Activated B cell treated with CpG ODN at 0.5 μM for 24 hours (primary cell): ENCODE measurements at regions of chr12 and their contacts with region 1.

Region 1: GRCh38 chr12:122793685-122794106 is 19.3 kb downstream of the CCDC62 start:
- DNase-seq: no peak
- ATAC-seq: peak; percentile 67
- H3K4me3 Mint-ChIP-seq: no peak overlapping the region
- H3K27ac Mint-ChIP-seq: no peak overlapping the region
- H3K4me1 Mint-ChIP-seq: peaks cover 5% of the 10 kb centered on the region
- H3K27me3 Mint-ChIP-seq: no peaks in the 10 kb centered on the region
- CTCF ChIP-seq: peak; percentile 46

Region 2: DNA sequence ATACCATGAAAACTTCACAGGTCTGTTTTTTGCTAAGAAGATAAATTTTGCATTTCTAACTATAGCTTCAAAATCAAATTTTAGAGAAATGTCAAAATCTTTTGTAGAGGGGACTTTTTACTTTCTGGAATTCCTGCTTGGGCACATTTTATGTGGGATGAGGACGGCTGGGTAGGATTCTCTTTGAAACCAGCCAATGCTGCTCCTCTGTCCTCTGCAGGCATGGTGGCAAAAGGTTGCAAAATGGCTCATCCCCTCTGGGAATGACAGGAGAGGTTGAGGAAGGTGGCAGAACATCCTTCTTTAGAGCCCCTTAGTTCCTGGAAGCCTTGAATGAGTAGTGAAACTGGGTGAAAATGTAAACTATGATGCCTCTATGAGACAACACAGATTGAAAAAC is 26.0 kb before region 1 on chr12:
- CTCF ChIA-PET with region 1: no interaction called
- POLR2A ChIA-PET with region 1: no interaction called
- intact Hi-C with region 1: no loop called
- DNase-seq: no peak
- ATAC-seq: no peak
- H3K4me3 Mint-ChIP-seq: no peak overlapping the region
- H3K27ac Mint-ChIP-seq: no peak overlapping the region
- H3K4me1 Mint-ChIP-seq: no peaks in the 10 kb centered on the region
- H3K27me3 Mint-ChIP-seq: no peaks in the 10 kb centered on the region
- CTCF ChIP-seq: no peak

Region 3: GRCh38 chr12:122813310-122813713 is 19.6 kb after region 1 on chr12:
- CTCF ChIA-PET with region 1: interaction called, 9 read pairs
- POLR2A ChIA-PET with region 1: interaction called, 8 read pairs
- intact Hi-C with region 1: loop called (anchors 1 kb)
- DNase-seq: peak; percentile 54
- ATAC-seq: peak; percentile 95
- H3K4me3 Mint-ChIP-seq: peak overlapping the region; percentile 86
- H3K27ac Mint-ChIP-seq: peak overlapping the region; percentile 98
- H3K4me1 Mint-ChIP-seq: peaks cover 53% of the 10 kb centered on the region
- H3K27me3 Mint-ChIP-seq: no peaks in the 10 kb centered on the region
- CTCF ChIP-seq: no peak

Region 4: DNA sequence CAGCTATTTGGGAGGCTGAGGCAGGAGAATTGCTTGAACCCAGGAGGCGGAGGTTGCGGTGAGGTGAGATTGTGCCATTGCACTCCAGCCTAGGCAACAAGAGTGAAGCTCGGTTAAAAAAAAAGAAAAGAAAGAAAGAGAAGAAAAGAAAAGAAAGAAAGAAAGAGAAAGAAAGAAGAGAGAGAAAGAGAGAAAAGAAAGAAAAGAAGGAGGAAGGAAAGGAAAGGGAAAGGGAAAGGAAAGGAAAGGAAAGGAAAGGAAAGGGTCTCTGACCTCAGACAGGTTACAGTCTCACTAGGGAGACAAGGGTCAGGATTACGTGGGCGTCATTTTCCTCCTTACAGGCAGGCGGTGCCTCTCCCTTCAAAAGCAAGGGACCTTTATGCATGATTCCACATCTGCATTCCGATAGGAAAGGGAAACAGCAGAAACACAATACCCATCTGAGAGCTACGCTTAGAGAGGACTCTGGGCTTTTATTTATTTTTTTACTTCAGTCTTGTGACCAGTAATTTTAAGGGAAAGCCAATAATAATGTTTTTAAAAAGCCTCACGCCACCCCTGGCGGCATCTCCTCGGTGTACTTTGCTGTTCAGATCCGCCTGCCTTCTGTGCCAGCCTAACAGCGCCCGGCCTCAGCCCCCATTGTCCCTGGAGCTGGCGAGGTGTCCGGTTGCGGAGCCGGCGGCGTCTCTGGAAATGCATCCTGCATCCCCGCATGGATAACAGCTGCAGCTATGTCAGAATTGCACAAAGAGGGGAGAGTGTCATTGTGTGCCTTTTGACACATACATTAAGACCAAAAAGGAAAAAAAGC is 40.6 kb after region 1 on chr12:
- CTCF ChIA-PET with region 1: interaction called, 63 read pairs
- POLR2A ChIA-PET with region 1: interaction called, 23 read pairs
- intact Hi-C with region 1: loop called (anchors 1 kb)
- DNase-seq: peak; percentile 14
- ATAC-seq: no peak
- H3K4me3 Mint-ChIP-seq: peak overlapping the region; percentile 92
- H3K27ac Mint-ChIP-seq: peak overlapping the region; percentile 86
- H3K4me1 Mint-ChIP-seq: peaks cover 38% of the 10 kb centered on the region
- H3K27me3 Mint-ChIP-seq: no peaks in the 10 kb centered on the region
- CTCF ChIP-seq: no peak

Region 5: GRCh38 chr12:122860346-122861090 is 66.8 kb after region 1 on chr12:
- CTCF ChIA-PET with region 1: interaction called, 81 read pairs
- POLR2A ChIA-PET with region 1: interaction called, 6 read pairs
- intact Hi-C with region 1: loop called (anchors 1 kb)
- DNase-seq: peak; percentile 76
- ATAC-seq: peak; percentile 72
- H3K4me3 Mint-ChIP-seq: no peak overlapping the region
- H3K27ac Mint-ChIP-seq: no peak overlapping the region
- H3K4me1 Mint-ChIP-seq: peaks cover 49% of the 10 kb centered on the region
- H3K27me3 Mint-ChIP-seq: no peaks in the 10 kb centered on the region
- CTCF ChIP-seq: peak; percentile 72

Region 6: GRCh38 chr12:122946690-122947341 is 153.1 kb after region 1 on chr12:
- CTCF ChIA-PET with region 1: interaction called, 39 read pairs
- POLR2A ChIA-PET with region 1: no interaction called
- intact Hi-C with region 1: loop called (anchors 1 kb)
- DNase-seq: peak; percentile 52
- ATAC-seq: peak; percentile 81
- H3K4me3 Mint-ChIP-seq: peak overlapping the region; percentile 57
- H3K27ac Mint-ChIP-seq: peak overlapping the region; percentile 68
- H3K4me1 Mint-ChIP-seq: peaks cover 48% of the 10 kb centered on the region
- H3K27me3 Mint-ChIP-seq: no peaks in the 10 kb centered on the region
- CTCF ChIP-seq: no peak